CD4-positive, alpha-beta memory T cell (primary cell): ENCODE measurements at regions of chr7 and their contacts with region 1.

Region 1: DNA sequence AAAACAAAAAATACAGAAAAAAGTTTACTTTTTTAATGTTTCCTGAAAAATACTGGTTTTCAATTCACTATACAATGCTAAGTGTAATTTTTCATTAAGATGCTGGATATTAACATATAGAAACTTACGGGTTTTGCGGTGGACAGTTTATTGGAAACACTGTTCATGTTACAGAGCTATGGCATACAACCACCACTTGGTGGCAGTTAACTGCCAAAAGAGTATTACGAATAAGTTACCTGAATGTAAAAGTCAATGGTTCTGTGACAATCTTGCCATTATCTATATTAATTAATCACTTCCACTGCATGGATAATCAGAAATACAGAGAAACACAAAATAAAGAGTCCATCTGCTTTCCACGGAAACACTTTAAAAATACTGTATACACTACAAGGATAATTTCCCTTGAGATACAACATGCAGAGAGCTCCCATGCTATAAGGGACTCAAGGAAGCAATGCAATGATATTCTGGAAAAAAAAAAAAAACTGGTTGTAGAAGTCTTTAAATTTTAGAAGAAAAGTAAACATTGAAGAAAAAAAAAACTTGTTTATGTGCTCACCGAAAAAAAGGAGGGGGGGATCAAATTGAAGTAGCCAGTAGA is 97.0 kb downstream of the TPK1 start:
- DNase-seq: peak in 4 of 5 donors; percentile 33 to 46 (median 38)
- H3K4me3 ChIP-seq: no peak overlapping the region
- H3K4me3 Mint-ChIP-seq: no peak overlapping the region
- H3K27ac ChIP-seq: no peak overlapping the region
- H3K27ac Mint-ChIP-seq: peak overlapping the region in 1 of 7 donors; percentile 62
- H3K4me1 ChIP-seq: no peaks in the 10 kb centered on the region
- H3K4me1 Mint-ChIP-seq: peaks cover 0 to 7% (median 2%) of the 10 kb centered on the region in 4 donors
- H3K27me3 ChIP-seq: no peaks in the 10 kb centered on the region
- H3K27me3 Mint-ChIP-seq: no peaks in the 10 kb centered on the region

Region 2: DNA sequence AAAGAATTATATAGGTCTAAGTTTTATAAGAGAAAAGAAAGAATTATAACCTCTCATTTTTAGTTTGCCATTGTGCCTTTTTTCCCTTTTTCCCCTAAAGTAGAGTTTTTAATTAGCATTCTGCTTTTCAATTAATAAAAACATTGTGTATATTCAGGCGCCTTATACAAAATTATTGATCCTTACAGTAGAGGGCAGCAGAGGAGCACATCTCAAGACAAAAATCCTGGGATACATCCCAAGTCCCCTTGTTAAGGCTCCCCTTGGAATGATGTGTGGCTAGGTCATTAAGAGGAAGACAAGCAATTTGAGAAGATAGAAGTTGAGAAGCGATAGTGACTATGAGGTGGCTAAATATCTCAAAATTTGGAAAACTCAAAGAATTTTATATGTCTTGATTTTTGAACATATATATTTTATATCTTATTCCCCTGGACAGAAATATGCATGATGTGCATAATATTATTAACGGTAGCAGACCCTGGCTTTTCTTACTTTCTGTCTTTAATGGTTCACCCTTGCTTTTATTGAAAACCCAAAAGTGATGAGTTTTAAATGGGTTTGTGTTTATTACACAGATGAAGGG is 116.1 kb after region 1 on chr7:
- CTCF ChIA-PET with region 1: interaction called, 6 read pairs
- POLR2A ChIA-PET with region 1: no interaction called
- intact Hi-C with region 1: loop called (anchors 2 kb)
- DNase-seq: no peak
- H3K4me3 ChIP-seq: no peak overlapping the region
- H3K4me3 Mint-ChIP-seq: no peak overlapping the region
- H3K27ac ChIP-seq: no peak overlapping the region
- H3K27ac Mint-ChIP-seq: no peak overlapping the region
- H3K4me1 ChIP-seq: no peaks in the 10 kb centered on the region
- H3K4me1 Mint-ChIP-seq: no peaks in the 10 kb centered on the region
- H3K27me3 ChIP-seq: no peaks in the 10 kb centered on the region
- H3K27me3 Mint-ChIP-seq: no peaks in the 10 kb centered on the region

Region 3: GRCh38 chr7:145036604-145037405 is 298.0 kb after region 1 on chr7:
- CTCF ChIA-PET with region 1: interaction called, 7 read pairs
- POLR2A ChIA-PET with region 1: no interaction called
- intact Hi-C with region 1: loop called (anchors 2 kb)
- DNase-seq: peak in 4 of 5 donors; percentile 22 to 39 (median 32)
- H3K4me3 ChIP-seq: no peak overlapping the region
- H3K4me3 Mint-ChIP-seq: peak overlapping the region in 1 of 8 donors; percentile 73
- H3K27ac ChIP-seq: no peak overlapping the region
- H3K27ac Mint-ChIP-seq: no peak overlapping the region
- H3K4me1 ChIP-seq: no peaks in the 10 kb centered on the region
- H3K4me1 Mint-ChIP-seq: peaks cover 2 to 5% (median 3%) of the 10 kb centered on the region in 4 donors
- H3K27me3 ChIP-seq: no peaks in the 10 kb centered on the region
- H3K27me3 Mint-ChIP-seq: peaks cover 5 to 10% of the 10 kb centered on the region in 2 donors